Lower leg skin (tissue), 4 donors: ENCODE measurements at regions of chr20 and their contacts with region 1.

Region 1: GRCh38 chr20:22949331-22950109 is 85.6 kb upstream of the SSTR4 start:
- DNase-seq: no peak
- H3K4me3 ChIP-seq: no peak overlapping the region
- CTCF ChIP-seq: no peak
- POLR2A ChIP-seq: no peak

Region 2: GRCh38 chr20:21004386-21005076 is 1945.0 kb before region 1 on chr20:
- intact Hi-C with region 1: loop called (anchors 5 kb)
- DNase-seq: peak in 1 of 2 donors; percentile 14
- H3K4me3 ChIP-seq: no peak overlapping the region
- CTCF ChIP-seq: no peak
- POLR2A ChIP-seq: no peak